ENCODE measurements at regions of chr10 and their contacts with region 1.

Region 1: DNA sequence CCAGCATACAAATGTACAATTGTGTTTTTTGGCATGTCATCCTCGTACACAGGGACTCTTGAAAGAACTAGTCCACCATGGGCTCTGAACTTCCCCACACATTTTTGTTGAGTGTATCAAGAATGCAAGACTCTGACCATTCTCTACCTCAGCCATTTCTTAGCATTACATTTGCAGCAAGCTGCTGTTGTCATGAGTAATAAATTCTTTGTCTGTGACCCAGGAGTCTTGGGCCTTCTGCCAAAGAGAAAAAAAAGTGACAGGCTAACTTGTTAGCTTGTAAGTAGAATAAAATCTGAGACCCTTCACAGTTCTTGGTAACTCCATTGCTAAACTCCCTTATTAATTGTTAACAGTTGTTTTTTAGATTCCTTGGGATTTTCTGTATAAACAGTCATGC is 542.3 kb upstream of the MBL2 start:
- DNase-seq: peak; percentile 95
- H3K4me3 ChIP-seq: no peak overlapping the region
- H3K27ac ChIP-seq: no peak overlapping the region
- H3K4me1 ChIP-seq: no peaks in the 10 kb centered on the region
- H3K27me3 ChIP-seq: no peaks in the 10 kb centered on the region
- CTCF ChIP-seq: no peak
- POLR2A ChIP-seq: no peak

Region 2: DNA sequence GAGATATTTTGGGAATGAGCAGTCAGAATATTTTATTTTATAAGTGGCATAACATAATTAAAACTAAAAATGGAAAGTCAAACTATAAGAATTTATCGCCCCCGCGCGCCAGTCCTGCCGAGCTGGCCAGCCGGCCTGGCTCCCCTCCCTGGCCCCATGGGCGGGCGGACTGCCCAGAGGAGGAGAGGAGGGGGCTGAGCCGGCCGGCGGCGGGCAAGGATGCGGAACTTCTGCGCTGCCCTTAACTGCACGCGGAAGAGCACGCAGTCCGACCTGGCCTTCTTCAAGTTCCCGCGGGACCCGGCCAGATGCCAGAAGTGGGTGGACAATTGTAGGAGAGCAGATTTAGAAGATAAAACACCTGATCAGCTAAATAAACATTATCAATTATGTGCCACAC is 904.0 kb before region 1 on chr10:
- CTCF ChIA-PET with region 1: no interaction called
- POLR2A ChIA-PET with region 1: no interaction called
- dilution Hi-C with region 1: no loop called
- intact Hi-C with region 1: no loop called
- DNase-seq: no peak
- H3K4me3 ChIP-seq: no peak overlapping the region
- H3K27ac ChIP-seq: no peak overlapping the region
- H3K4me1 ChIP-seq: peaks cover 4% of the 10 kb centered on the region
- H3K27me3 ChIP-seq: no peaks in the 10 kb centered on the region
- CTCF ChIP-seq: no peak
- POLR2A ChIP-seq: no peak

Region 3: GRCh38 chr10:52818019-52818418 is 496.9 kb before region 1 on chr10:
- CTCF ChIA-PET with region 1: interaction called, 10 read pairs
- POLR2A ChIA-PET with region 1: no interaction called
- dilution Hi-C with region 1: no loop called
- intact Hi-C with region 1: no loop called
- DNase-seq: peak; percentile 58
- H3K4me3 ChIP-seq: no peak overlapping the region
- H3K27ac ChIP-seq: no peak overlapping the region
- H3K4me1 ChIP-seq: no peaks in the 10 kb centered on the region
- H3K27me3 ChIP-seq: peaks cover 4 to 5% of the 10 kb centered on the region in 2 experiments
- CTCF ChIP-seq: peak; percentile 37 to 60
- POLR2A ChIP-seq: no peak

Region 4: DNA sequence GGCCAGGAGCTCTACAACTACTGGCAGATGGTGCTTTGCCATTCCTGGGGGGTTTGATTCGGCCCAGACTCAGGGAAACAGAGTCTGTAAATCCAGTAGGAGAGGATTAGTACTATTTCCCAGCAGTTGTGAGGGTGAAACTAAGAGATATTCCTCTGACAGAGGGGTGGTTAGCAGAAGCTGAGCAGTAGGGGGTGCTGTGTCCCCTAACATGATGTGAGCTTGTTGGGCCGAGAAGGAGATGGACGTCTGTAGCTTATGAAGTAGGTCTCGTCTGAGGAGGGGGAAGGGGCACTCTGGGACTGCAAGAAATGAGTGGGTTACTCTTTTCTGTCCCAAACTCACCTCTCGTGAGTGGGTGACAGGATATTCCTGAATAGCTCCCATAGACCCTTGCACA is 363.1 kb before region 1 on chr10:
- CTCF ChIA-PET with region 1: interaction called, 30 read pairs
- POLR2A ChIA-PET with region 1: no interaction called
- dilution Hi-C with region 1: no loop called
- intact Hi-C with region 1: loop called (anchors 5 kb)
- DNase-seq: peak; percentile 73
- H3K4me3 ChIP-seq: no peak overlapping the region
- H3K27ac ChIP-seq: no peak overlapping the region
- H3K4me1 ChIP-seq: no peaks in the 10 kb centered on the region
- H3K27me3 ChIP-seq: no peaks in the 10 kb centered on the region
- CTCF ChIP-seq: peak; percentile 55 to 71
- POLR2A ChIP-seq: no peak

Region 5: DNA sequence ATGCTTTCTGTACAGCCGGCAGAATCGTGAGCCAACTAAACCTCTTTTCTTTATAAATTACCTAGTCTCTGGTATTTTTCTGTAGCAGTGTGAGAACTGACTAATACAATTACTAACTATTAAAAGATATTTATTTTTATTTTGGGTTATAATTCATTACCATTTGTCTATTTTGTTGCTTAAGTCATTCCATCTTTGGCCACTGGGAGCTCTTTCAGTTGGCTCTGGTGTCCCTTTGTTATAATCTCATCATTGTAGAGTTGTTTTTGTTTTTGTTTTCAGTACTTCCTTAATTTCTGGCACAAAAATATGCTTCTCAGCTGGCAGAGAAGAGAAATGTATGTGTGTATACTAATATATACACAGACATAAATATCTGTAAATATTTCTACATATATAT is 265.6 kb after region 1 on chr10:
- CTCF ChIA-PET with region 1: no interaction called
- POLR2A ChIA-PET with region 1: no interaction called
- dilution Hi-C with region 1: no loop called
- intact Hi-C with region 1: loop called (anchors 10 kb)
- DNase-seq: peak; percentile 7
- H3K4me3 ChIP-seq: no peak overlapping the region
- H3K27ac ChIP-seq: peak overlapping the region; percentile 77
- H3K4me1 ChIP-seq: peaks cover 25% of the 10 kb centered on the region
- H3K27me3 ChIP-seq: no peaks in the 10 kb centered on the region
- CTCF ChIP-seq: no peak
- POLR2A ChIP-seq: no peak

Region 6: DNA sequence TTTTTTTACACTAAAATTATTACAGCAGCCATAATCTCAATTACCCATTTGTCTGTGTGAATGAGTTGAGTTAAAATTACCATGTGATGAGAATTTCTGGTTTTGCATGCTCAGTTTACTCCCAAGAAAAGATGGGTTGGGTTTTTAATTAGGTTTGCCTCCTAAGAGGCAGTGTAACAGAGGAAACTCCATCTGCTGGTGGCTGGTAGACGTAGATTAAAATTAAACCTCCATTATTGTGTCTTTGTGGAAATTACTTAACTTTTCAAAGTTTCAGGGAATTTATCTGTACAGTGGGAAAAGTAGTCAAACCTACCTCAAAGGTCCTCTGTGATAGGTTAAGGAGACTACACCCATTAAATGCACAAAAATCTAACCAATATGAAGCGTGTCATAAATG is 531.9 kb after region 1 on chr10:
- CTCF ChIA-PET with region 1: interaction called, 10 read pairs
- POLR2A ChIA-PET with region 1: no interaction called
- dilution Hi-C with region 1: no loop called
- intact Hi-C with region 1: no loop called
- DNase-seq: no peak
- H3K4me3 ChIP-seq: no peak overlapping the region
- H3K27ac ChIP-seq: no peak overlapping the region
- H3K4me1 ChIP-seq: no peaks in the 10 kb centered on the region
- H3K27me3 ChIP-seq: no peaks in the 10 kb centered on the region
- CTCF ChIP-seq: peak in 1 of 2 donors; percentile 6
- POLR2A ChIP-seq: no peak

Region 7: GRCh38 chr10:54402576-54402975 is 1087.7 kb after region 1 on chr10:
- CTCF ChIA-PET with region 1: interaction called, 6 read pairs
- POLR2A ChIA-PET with region 1: no interaction called
- dilution Hi-C with region 1: no loop called
- intact Hi-C with region 1: loop called (anchors 5 kb)
- DNase-seq: peak; percentile 53
- H3K4me3 ChIP-seq: no peak overlapping the region
- H3K27ac ChIP-seq: no peak overlapping the region
- H3K4me1 ChIP-seq: no peaks in the 10 kb centered on the region
- H3K27me3 ChIP-seq: no peaks in the 10 kb centered on the region
- CTCF ChIP-seq: peak; percentile 16 to 44
- POLR2A ChIP-seq: no peak